Breast epithelium (tissue), 4 donors: ENCODE measurements at regions of chr12 and their contacts with region 1.

Region 1: GRCh38 chr12:108803428-108804105 is 53.8 kb downstream of the SSH1 start:
- DNase-seq: peak in 1 of 2 donors; percentile 83
- H3K4me3 ChIP-seq: no peak overlapping the region
- H3K27ac ChIP-seq: peak overlapping the region; percentile 85 to 90
- H3K4me1 ChIP-seq: no peaks in the 10 kb centered on the region
- H3K27me3 ChIP-seq: no peaks in the 10 kb centered on the region
- CTCF ChIP-seq: peak; percentile 92 to 99 (median 95)
- POLR2A ChIP-seq: no peak

Region 2: DNA sequence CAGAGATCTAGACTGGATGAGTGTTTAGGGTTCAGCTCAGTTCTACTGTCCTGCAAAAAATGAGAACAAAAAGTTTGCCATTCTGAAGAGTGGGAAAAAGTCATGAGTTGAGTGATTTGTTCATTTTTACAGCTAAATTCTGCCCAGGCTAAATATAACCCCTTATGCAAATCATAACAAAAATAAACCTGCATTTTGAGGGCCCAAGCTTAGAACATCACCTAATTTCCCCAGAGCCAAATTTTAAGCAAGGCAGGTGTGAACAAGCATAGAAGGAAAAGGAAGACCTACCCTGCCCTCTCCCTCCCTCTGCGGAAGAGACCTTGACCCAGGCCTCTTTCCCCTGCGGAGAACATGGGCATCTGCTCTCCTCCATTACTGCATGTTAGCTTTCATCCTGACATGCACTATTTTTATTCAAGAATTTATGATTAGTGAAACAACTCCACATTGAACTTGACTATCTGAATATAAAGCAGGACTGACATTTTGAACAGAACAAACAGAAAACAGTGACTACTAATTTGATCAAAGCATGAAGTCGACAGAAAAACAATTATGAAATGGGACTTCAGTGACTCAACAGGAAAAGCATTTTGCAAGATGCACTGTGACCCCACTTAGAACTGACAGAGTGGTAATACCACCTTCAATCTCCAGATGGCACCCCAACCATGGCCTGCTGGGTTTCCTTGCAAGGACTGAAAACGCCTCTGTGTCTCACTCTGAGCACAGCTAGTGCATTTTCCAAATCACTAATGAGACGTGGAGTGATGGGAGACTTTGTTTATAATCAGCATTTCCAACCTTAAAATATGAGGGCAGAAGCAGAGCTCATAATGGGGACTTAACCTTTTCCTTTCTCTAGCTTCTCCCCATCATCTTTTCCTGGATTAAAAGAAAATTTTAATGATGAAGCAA is 139.0 kb before region 1 on chr12:
- intact Hi-C with region 1: loop called (anchors 10 kb)
- DNase-seq: peak; percentile 73 to 88
- H3K4me3 ChIP-seq: peak overlapping the region in 1 of 3 donors; percentile 26
- H3K27ac ChIP-seq: peak overlapping the region; percentile 83 to 88
- H3K4me1 ChIP-seq: peaks cover 0 to 4% of the 10 kb centered on the region in 2 donors
- H3K27me3 ChIP-seq: no peaks in the 10 kb centered on the region
- CTCF ChIP-seq: peak; percentile 95 to 98 (median 97)
- POLR2A ChIP-seq: no peak

Region 3: DNA sequence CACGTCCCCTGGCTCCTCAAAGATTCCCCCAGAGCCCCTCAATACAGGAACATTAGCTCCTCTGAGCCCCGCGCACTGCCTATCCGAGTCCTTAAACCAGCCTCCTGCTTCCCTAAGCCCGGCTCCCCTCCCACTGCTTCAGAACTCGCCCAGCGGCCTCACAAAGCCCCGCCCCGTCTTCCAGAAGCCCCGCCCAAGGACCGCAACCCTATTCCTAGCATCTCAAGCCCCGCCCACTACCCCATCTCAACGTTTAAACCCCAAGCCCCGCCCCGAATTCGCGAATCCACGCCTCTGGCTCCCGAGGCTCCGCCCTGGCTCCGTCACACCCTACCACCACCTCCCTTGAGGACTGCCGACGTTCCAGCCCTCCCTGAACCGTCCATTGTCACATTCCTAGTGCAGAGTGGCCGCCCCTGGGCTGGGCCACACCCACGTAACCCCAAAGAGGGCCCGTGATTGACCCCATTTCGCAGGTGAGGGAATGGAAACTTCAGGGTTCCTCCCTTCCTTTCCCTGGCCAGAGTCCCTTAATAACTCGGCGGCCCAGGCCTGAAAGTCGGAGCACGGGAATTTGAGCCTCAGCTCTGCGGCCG is 71.6 kb before region 1 on chr12:
- intact Hi-C with region 1: loop called (anchors 2 kb)
- DNase-seq: peak; percentile 99 to 100
- H3K4me3 ChIP-seq: peak overlapping the region; percentile 83 to 92 (median 89)
- H3K27ac ChIP-seq: peak overlapping the region; percentile 97 to 98
- H3K4me1 ChIP-seq: no peaks in the 10 kb centered on the region
- H3K27me3 ChIP-seq: no peaks in the 10 kb centered on the region
- CTCF ChIP-seq: no peak
- POLR2A ChIP-seq: peak; percentile 74

Region 4: DNA sequence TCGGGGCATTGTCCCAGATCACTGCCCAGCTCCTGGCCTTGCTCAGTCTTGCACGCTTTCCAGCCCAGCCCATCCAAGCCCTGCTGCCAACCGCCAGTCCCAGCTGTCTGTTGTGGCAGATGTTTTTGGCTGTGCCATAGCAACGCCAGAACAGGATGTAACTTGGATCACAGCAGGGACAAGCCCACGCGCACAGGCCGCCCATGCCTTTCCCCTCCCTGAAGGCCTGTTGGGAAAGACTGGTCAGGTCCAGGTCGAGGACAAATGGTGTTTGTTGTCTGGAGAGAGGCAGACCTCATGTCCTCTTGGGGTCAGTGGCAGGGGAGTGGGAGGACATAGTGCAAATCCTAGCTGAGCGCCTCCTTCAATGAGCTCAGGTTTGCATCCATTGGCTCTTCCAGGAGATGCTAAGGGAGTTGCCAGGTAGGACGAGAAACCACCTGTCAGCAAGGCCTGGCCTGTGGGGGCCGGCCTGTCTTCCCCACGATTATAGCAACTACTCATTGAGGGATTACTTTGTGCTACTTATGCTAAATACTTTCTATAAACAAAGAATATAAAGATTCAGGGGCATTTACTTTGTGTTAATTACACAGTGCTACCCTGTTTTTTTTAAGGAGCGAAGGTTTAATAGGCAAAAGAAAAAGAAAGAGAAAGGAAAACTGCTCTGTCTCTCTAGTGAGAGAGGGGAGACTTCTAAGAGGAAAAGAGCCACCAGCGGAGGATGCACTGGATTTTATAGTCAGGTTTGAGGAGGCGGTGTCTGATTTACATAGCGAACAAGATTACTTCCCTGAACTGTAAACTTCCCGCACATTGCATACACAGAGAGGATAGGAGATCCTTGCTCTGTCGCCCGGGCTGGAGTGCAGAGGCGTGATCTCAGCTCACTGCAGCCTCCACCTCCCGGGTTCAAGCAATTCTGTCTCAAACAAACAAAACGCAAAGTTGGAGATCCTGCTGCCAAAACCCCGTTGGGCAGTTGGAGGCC is 29.5 kb before region 1 on chr12:
- intact Hi-C with region 1: no loop called
- DNase-seq: peak; percentile 70 to 95
- H3K4me3 ChIP-seq: peak overlapping the region in 2 of 3 donors; percentile 16 to 31
- H3K27ac ChIP-seq: peak overlapping the region; percentile 81 to 83
- H3K4me1 ChIP-seq: peaks cover 0 to 12% of the 10 kb centered on the region in 2 donors
- H3K27me3 ChIP-seq: no peaks in the 10 kb centered on the region
- CTCF ChIP-seq: no peak
- POLR2A ChIP-seq: no peak